ENCODE measurements at regions of chr2 and their contacts with region 1.

Region 1: GRCh38 chr2:174603280-174603679 is 5.7 kb upstream of the WIPF1 start:
- DNase-seq: peak; percentile 58 to 81 (median 63)
- H3K4me3 ChIP-seq: no peak overlapping the region
- H3K4me3 Mint-ChIP-seq: peak overlapping the region in 6 of 8 donors; percentile 13 to 62 (median 32)
- H3K27ac ChIP-seq: peak overlapping the region; percentile 11
- H3K27ac Mint-ChIP-seq: peak overlapping the region; percentile 71 to 99 (median 89)
- H3K4me1 ChIP-seq: peaks cover 84% of the 10 kb centered on the region
- H3K4me1 Mint-ChIP-seq: peaks cover 71 to 96% (median 78%) of the 10 kb centered on the region in 4 donors
- H3K27me3 ChIP-seq: no peaks in the 10 kb centered on the region
- H3K27me3 Mint-ChIP-seq: no peaks in the 10 kb centered on the region

Region 2: GRCh38 chr2:174561283-174561971 is 41.9 kb before region 1 on chr2:
- CTCF ChIA-PET with region 1: interaction called, 430 read pairs
- POLR2A ChIA-PET with region 1: interaction called, 53 read pairs
- intact Hi-C with region 1: loop called (anchors 5 kb)
- DNase-seq: no peak
- H3K4me3 ChIP-seq: no peak overlapping the region
- H3K4me3 Mint-ChIP-seq: no peak overlapping the region
- H3K27ac ChIP-seq: no peak overlapping the region
- H3K27ac Mint-ChIP-seq: peak overlapping the region in 6 of 7 donors; percentile 36 to 94 (median 72)
- H3K4me1 ChIP-seq: no peaks in the 10 kb centered on the region
- H3K4me1 Mint-ChIP-seq: peaks cover 4 to 14% (median 12%) of the 10 kb centered on the region in 4 donors
- H3K27me3 ChIP-seq: no peaks in the 10 kb centered on the region
- H3K27me3 Mint-ChIP-seq: no peaks in the 10 kb centered on the region

Region 3: DNA sequence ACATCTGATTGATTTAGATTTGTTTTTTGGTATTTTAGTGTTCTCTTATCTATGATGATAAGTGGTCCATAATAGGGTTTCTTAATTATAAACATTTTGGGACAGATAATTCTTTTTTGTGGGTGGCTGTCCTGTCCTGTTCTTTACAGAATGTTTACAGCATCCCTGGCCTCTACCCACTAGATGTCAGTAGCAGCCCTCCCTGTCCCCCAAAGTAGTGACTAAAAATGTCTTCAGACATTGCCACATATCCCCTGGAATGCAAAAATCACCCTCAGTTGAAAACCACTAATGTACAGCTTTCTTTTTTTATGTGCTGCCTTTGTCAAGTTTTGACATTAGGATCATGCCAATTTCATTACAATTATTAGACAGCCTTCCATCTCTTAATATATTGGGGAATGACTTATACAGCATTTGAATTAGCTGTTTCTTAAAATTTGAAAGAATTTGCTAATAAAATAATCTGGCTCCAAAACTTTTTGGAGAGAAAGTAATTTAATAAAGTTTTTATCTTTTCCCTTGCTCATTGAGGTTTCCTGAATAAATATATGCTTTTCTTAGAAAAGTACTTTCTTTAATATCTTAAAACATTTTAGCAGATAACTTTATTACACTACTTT is 25.2 kb before region 1 on chr2:
- CTCF ChIA-PET with region 1: interaction called, 430 read pairs
- POLR2A ChIA-PET with region 1: interaction called, 256 read pairs
- intact Hi-C with region 1: loop called (anchors 1 kb)
- DNase-seq: peak; percentile 63 to 77 (median 67)
- H3K4me3 ChIP-seq: no peak overlapping the region
- H3K4me3 Mint-ChIP-seq: peak overlapping the region in 1 of 8 donors; percentile 3
- H3K27ac ChIP-seq: no peak overlapping the region
- H3K27ac Mint-ChIP-seq: peak overlapping the region; percentile 66 to 88 (median 80)
- H3K4me1 ChIP-seq: peaks cover 93% of the 10 kb centered on the region
- H3K4me1 Mint-ChIP-seq: peaks cover 49 to 93% (median 68%) of the 10 kb centered on the region in 4 donors
- H3K27me3 ChIP-seq: no peaks in the 10 kb centered on the region
- H3K27me3 Mint-ChIP-seq: no peaks in the 10 kb centered on the region

Region 4: GRCh38 chr2:174634130-174635014 is 31.1 kb after region 1 on chr2:
- CTCF ChIA-PET with region 1: interaction called, 22 read pairs
- POLR2A ChIA-PET with region 1: interaction called, 139 read pairs
- intact Hi-C with region 1: loop called (anchors 2 kb)
- DNase-seq: peak; percentile 48 to 66 (median 53)
- H3K4me3 ChIP-seq: peak overlapping the region; percentile 54 to 72
- H3K4me3 Mint-ChIP-seq: peak overlapping the region; percentile 91 to 94 (median 92)
- H3K27ac ChIP-seq: peak overlapping the region; percentile 76
- H3K27ac Mint-ChIP-seq: peak overlapping the region; percentile 89 to 98 (median 94)
- H3K4me1 ChIP-seq: peaks cover 58% of the 10 kb centered on the region
- H3K4me1 Mint-ChIP-seq: peaks cover 46 to 84% (median 56%) of the 10 kb centered on the region in 4 donors
- H3K27me3 ChIP-seq: no peaks in the 10 kb centered on the region
- H3K27me3 Mint-ChIP-seq: no peaks in the 10 kb centered on the region

Region 5: GRCh38 chr2:174738841-174739240 is 135.6 kb after region 1 on chr2:
- CTCF ChIA-PET with region 1: no interaction called
- POLR2A ChIA-PET with region 1: no interaction called
- intact Hi-C with region 1: no loop called
- DNase-seq: no peak
- H3K4me3 ChIP-seq: no peak overlapping the region
- H3K4me3 Mint-ChIP-seq: no peak overlapping the region
- H3K27ac ChIP-seq: no peak overlapping the region
- H3K27ac Mint-ChIP-seq: no peak overlapping the region
- H3K4me1 ChIP-seq: no peaks in the 10 kb centered on the region
- H3K4me1 Mint-ChIP-seq: no peaks in the 10 kb centered on the region
- H3K27me3 ChIP-seq: no peaks in the 10 kb centered on the region
- H3K27me3 Mint-ChIP-seq: no peaks in the 10 kb centered on the region

Measured in CD4-positive, alpha-beta memory T cell (primary cell).